AG04449 (cell line): ENCODE measurements at regions of chr3 and their contacts with region 1.

Region 1: DNA sequence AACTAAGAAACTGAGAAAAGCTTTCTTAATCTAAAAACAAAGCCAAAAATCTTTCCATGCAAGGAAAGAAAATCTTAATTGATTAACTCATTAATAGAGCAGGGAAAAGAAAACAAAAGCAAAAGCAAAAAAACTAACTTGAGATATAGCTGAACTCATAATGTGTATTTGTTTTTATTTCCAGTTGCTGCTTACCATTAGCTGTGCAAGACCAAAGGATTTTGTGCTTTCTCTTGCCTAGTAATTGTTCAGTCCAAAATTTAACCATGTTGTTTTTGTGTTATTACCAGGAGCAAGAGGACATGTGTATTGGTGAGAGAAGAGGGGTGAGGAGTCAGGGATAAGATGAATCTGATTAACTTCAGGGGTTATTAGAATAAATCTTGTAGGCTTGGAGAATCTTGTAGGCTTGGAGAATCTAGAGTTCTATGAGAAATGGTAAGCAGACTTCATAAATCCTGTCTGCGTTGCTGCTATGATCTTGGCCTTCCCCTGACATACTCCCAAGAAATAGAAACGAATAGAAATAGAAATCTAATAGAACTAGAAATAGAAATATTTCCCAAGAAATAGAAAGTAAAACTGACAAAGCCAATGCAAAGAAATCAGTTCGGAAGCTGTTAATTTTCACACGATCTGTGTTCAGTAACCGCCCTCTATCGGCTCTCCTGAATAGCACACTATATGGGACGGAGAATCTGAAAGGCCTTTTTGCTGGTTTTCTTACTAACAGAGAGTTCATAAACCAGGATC is 72.6 kb upstream of the TNFSF10 start:
- DNase-seq: no peak
- H3K4me3 ChIP-seq: no peak overlapping the region; the same call in 1 of the 2 replicates
- CTCF ChIP-seq: peak; percentile 62

Region 2: GRCh38 chr3:172461530-172462138 is 134.2 kb before region 1 on chr3:
- CTCF ChIA-PET with region 1: interaction called, 13 read pairs
- POLR2A ChIA-PET with region 1: no interaction called
- DNase-seq: no peak
- H3K4me3 ChIP-seq: no peak overlapping the region
- CTCF ChIP-seq: peak; percentile 59

Region 3: DNA sequence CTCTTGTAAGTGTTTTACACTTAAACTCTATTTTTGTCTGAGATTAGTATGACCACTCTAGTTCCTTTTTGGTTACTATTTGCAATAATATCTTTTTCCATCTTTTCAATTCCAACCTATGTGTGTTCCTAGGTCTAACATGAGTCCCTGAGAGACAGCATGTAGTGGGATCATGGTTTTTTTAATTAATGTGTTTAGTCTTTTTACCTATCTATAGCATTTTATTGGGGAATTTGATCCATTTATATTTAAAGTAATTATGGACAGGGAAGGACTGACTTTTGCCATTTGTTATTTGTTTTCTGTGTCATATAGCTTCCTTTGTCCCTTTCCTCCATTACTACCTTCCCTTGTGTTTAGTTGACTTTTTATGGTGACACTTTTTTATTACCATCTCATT is 94.3 kb before region 1 on chr3:
- CTCF ChIA-PET with region 1: interaction called, 30 read pairs
- POLR2A ChIA-PET with region 1: no interaction called
- DNase-seq: no peak
- H3K4me3 ChIP-seq: no peak overlapping the region
- CTCF ChIP-seq: no peak

Region 4: DNA sequence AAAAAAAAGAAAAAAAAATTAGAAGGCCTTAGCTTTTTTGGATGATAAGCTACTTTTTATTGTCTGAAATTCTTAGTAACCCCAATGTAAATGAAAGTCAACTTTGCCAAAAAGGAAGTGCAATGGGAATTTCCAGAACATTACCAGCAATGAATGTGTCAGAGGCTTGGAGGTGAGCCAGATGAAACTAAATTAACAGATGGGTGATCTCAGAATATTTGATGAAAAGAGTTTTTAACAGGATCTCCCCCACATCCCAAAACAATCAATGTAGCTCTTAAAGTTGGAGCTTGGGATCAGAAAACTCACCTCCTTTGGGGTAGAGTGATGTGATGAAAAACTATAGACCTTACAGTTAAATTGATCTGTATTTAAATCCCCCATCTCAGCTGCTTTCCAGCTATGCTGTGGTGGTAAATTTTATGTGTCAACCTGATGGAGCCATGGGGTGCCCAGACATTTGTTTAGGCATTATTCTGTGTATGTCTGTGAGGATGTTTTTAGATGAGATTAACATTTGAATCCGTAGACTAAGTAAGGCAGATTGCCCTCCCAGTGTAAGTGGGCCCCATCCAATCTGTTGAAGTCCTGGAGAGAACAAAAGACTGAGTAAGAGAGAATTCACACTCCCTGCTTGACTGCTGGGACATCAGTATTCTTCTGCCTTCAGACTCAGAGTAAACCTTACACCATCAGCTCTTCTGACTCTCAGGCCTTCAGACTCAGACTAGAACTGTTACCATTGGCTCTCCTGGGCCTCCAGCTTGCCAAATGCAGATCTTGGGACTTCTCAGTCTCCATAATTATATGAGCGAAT is 11.7 kb after region 1 on chr3:
- CTCF ChIA-PET with region 1: interaction called, 86 read pairs
- POLR2A ChIA-PET with region 1: no interaction called
- DNase-seq: peak; percentile 52
- H3K4me3 ChIP-seq: no peak overlapping the region
- CTCF ChIP-seq: no peak

Region 5: GRCh38 chr3:172614340-172615274 is 18.8 kb after region 1 on chr3:
- CTCF ChIA-PET with region 1: interaction called, 86 read pairs
- POLR2A ChIA-PET with region 1: no interaction called
- DNase-seq: no peak
- H3K4me3 ChIP-seq: no peak overlapping the region
- CTCF ChIP-seq: no peak

Region 6: GRCh38 chr3:172658344-172659245 is 62.8 kb after region 1 on chr3:
- CTCF ChIA-PET with region 1: interaction called, 11 read pairs
- POLR2A ChIA-PET with region 1: no interaction called
- DNase-seq: peak; percentile 87
- H3K4me3 ChIP-seq: no peak overlapping the region
- CTCF ChIP-seq: no peak

Region 7: DNA sequence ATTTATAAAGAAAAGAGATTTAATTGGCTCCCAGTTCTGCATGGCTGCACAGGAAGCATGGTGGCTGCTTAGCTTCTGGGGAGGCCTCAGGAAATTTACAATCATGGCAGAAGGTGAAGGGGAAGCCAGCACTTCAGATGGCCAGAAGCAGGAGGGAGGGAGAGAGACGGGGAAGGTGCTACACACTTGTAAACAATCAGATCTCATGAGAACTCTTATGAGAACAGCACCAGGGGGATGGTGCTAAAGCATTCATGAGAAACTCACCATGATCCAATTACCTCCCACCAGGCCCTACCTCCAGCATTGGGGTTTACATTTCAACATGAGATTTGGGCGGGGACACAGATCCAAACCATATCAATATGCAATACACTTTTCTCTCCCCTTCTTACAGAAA is 228.4 kb after region 1 on chr3:
- CTCF ChIA-PET with region 1: no interaction called
- POLR2A ChIA-PET with region 1: no interaction called
- DNase-seq: no peak
- H3K4me3 ChIP-seq: no peak overlapping the region
- CTCF ChIP-seq: no peak